Activated CD4-positive, alpha-beta T cell treated with anti-CD3 and anti-CD28 coated beads for 36 hours (primary cell): ENCODE measurements at regions of chr1 and their contacts with region 1.

Region 1: GRCh38 chr1:32394141-32394889 is at the start of gene BSDC1:
- DNase-seq: peak; percentile 100
- ATAC-seq: peak; percentile 98
- H3K4me3 Mint-ChIP-seq: peak within 1 kb of the TSS; percentile 83
- H3K27ac Mint-ChIP-seq: peak within 1 kb of the TSS; percentile 98
- H3K4me1 Mint-ChIP-seq: peaks cover 19% of the 10 kb centered on the region
- H3K27me3 Mint-ChIP-seq: no peaks in the 10 kb centered on the region
- total RNA-seq, gene BSDC1: 29.4 to 36.9 TPM

Region 2: GRCh38 chr1:31644560-31645273 is 749.6 kb before region 1 on chr1 and contains the start of gene PEF1:
- CTCF ChIA-PET with region 1: no interaction called
- POLR2A ChIA-PET with region 1: no interaction called
- intact Hi-C with region 1: loop called in 1 of 2 experiments (anchors 10 kb)
- DNase-seq: peak; percentile 100
- ATAC-seq: peak; percentile 91
- H3K4me3 Mint-ChIP-seq: peak within 1 kb of the TSS; percentile 95
- H3K27ac Mint-ChIP-seq: peak within 1 kb of the TSS; percentile 100
- H3K4me1 Mint-ChIP-seq: peaks cover 23% of the 10 kb centered on the region
- H3K27me3 Mint-ChIP-seq: no peaks in the 10 kb centered on the region
- total RNA-seq, gene PEF1: 48.8 to 59.3 TPM

Region 3: DNA sequence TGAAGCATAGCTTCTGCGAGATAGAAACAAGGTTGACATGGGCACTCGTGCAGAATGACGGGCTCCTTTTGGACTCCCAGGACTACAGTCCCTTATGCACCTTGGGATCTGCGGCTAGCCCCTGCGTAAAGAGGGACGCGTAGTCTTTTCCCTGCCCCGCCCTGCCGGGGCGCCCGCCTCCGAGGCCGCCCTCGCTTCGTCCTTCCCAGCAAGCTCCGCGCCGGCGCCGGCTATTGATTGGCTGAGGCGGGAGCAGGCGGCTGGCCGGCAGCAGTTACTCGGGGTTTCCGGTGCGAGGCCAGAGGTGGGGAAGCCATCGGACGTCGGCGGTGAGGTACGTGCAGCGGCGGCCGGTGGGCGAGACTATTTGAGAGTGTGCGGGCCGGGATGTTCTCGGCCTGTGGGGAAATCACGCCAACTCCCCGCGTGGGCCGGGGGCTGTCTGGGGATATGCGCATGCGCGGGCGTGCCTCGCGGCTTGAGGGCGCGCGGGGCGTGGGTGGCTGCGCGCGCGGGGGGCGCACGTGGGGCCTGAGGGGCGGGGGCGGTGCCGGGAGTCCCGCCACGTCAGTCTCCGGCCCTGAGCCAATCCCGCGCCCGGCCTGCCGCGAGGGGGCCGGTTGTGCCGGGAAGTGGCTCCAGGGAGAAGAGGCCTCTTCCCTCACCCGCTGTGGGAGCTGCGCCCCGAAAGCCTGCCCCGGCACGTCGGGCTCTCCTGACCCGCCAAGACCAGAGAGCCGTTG is 214.7 kb before region 1 on chr1 and contains the start of gene TXLNA:
- CTCF ChIA-PET with region 1: interaction called, 3 read pairs
- POLR2A ChIA-PET with region 1: interaction called, 7 read pairs
- intact Hi-C with region 1: loop called in 1 of 2 experiments (anchors 1 kb)
- DNase-seq: peak; percentile 96
- ATAC-seq: peak; percentile 93
- H3K4me3 Mint-ChIP-seq: peak within 1 kb of the TSS; percentile 86
- H3K27ac Mint-ChIP-seq: peak within 1 kb of the TSS; percentile 98
- H3K4me1 Mint-ChIP-seq: peaks cover 44% of the 10 kb centered on the region
- H3K27me3 Mint-ChIP-seq: no peaks in the 10 kb centered on the region
- total RNA-seq, gene TXLNA: 79.5 to 79.7 TPM

Region 4: GRCh38 chr1:32205401-32206370 is 188.6 kb before region 1 on chr1 and contains the start of gene IQCC:
- CTCF ChIA-PET with region 1: no interaction called
- POLR2A ChIA-PET with region 1: no interaction called
- intact Hi-C with region 1: loop called in 1 of 2 experiments (anchors 1 kb)
- DNase-seq: peak; percentile 94
- ATAC-seq: peak; percentile 75
- H3K4me3 Mint-ChIP-seq: peak within 1 kb of the TSS; percentile 90
- H3K27ac Mint-ChIP-seq: peak within 1 kb of the TSS; percentile 87
- H3K4me1 Mint-ChIP-seq: peaks cover 28% of the 10 kb centered on the region
- H3K27me3 Mint-ChIP-seq: no peaks in the 10 kb centered on the region
- total RNA-seq, gene IQCC: 4.4 to 5.0 TPM

Region 5: DNA sequence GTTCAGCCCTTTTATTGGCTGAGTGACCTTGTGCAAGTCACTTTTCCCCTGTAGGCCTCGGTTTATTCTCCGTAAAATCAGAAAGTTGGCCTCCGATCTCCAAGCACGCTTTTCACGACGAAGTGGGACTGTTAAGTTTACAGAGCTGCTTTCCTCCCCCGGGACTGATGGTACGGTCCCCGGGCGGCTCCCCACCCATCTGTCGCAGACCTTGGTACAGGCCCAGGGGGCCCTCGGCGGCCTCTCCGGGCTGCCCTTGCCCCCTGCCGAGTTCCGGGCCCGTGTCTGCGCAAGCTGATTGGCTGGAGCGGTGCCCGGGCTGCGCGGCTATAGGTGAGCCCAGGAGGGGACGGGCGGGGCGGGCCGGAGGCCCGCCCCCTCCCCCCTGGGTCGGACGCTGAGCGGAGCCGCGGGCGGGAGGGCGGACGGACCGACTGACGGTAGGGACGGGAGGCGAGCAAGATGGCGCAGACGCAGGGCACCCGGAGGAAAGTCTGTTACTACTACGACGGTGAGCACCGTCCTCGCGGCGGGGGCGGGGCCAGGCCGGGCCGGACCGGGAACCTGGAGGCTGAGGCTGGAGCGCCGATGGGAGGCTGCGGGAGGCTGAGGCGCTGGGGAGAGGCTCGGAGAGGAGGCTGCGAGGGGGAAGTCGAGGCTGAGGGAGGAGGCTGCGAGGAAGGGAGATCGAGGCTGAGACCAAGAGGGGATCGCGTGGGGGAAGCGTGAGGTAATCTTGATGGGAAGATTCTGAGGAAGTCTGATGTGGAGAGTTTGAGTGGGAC is 102.4 kb before region 1 on chr1 and contains the start of gene HDAC1:
- CTCF ChIA-PET with region 1: no interaction called
- POLR2A ChIA-PET with region 1: interaction called, 3 read pairs
- intact Hi-C with region 1: loop called in 1 of 2 experiments (anchors 1 kb)
- DNase-seq: peak; percentile 99
- ATAC-seq: peak; percentile 98
- H3K4me3 Mint-ChIP-seq: peak within 1 kb of the TSS; percentile 100
- H3K27ac Mint-ChIP-seq: peak within 1 kb of the TSS; percentile 99
- H3K4me1 Mint-ChIP-seq: peaks cover 43% of the 10 kb centered on the region
- H3K27me3 Mint-ChIP-seq: no peaks in the 10 kb centered on the region
- total RNA-seq, gene HDAC1: 132 to 146 TPM

Region 6: DNA sequence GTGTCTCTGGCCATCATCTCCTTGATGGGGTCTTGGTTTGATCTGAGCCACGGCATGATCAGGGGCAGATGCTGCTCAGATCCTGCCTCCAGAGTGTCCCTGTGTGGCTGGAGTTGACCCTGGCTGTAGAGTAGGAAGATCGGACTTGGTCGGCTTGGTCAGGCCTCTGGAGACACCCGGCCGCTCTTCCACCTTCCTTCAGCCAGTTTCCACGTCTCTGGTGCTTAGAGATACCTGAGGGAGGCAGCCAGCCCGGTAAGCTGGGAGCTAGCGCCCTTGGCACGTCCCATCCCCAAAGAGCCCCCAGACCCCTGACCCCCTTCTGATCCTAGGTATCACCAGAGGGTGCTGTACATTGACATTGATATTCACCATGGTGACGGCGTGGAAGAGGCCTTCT is 67.1 kb before region 1 on chr1:
- CTCF ChIA-PET with region 1: no interaction called
- POLR2A ChIA-PET with region 1: no interaction called
- intact Hi-C with region 1: no loop called
- DNase-seq: no peak
- ATAC-seq: no peak
- H3K4me3 Mint-ChIP-seq: no peak overlapping the region
- H3K27ac Mint-ChIP-seq: no peak overlapping the region
- H3K4me1 Mint-ChIP-seq: peaks cover 25% of the 10 kb centered on the region
- H3K27me3 Mint-ChIP-seq: no peaks in the 10 kb centered on the region

Region 7: GRCh38 chr1:32351399-32352238 is 42.7 kb before region 1 on chr1:
- CTCF ChIA-PET with region 1: interaction called, 4 read pairs
- POLR2A ChIA-PET with region 1: interaction called, 6 read pairs
- intact Hi-C with region 1: loop called (anchors 1 kb)
- DNase-seq: peak; percentile 96
- ATAC-seq: peak; percentile 96
- H3K4me3 Mint-ChIP-seq: peak overlapping the region; percentile 73
- H3K27ac Mint-ChIP-seq: peak overlapping the region; percentile 82
- H3K4me1 Mint-ChIP-seq: peaks cover 20% of the 10 kb centered on the region
- H3K27me3 Mint-ChIP-seq: no peaks in the 10 kb centered on the region